ENCODE measurements at regions of chr1 and their contacts with region 1.

Region 1: GRCh38 chr1:45339789-45340570 is at the starts of genes MUTYH and TOE1:
- DNase-seq: peak; percentile 79 to 92 (median 87)
- ATAC-seq: peak; percentile 84 to 90 (median 90)
- H3K4me3 ChIP-seq: peak within 1 kb of the TSS; percentile 68 to 82
- H3K4me3 Mint-ChIP-seq: peak within 1 kb of the TSS; percentile 98 to 100 (median 100)
- H3K27ac ChIP-seq: peak within 1 kb of the TSS; percentile 95
- H3K27ac Mint-ChIP-seq: peak within 1 kb of the TSS; percentile 99 to 100
- H3K4me1 ChIP-seq: peaks cover 7 to 39% of the 10 kb centered on the region in 2 experiments
- H3K4me1 Mint-ChIP-seq: peaks cover 62 to 70% (median 62%) of the 10 kb centered on the region in 3 donors
- H3K27me3 ChIP-seq: no peaks in the 10 kb centered on the region
- H3K27me3 Mint-ChIP-seq: no peaks in the 10 kb centered on the region
- total RNA-seq, gene MUTYH: 60.2 to 71.0 (median 68.4) TPM
- total RNA-seq, gene TOE1: 16.8 to 50.0 (median 19.8) TPM

Region 2: GRCh38 chr1:44730741-44731512 is 609.1 kb before region 1 on chr1 and contains the start of gene RNU5D-1:
- CTCF ChIA-PET with region 1: no interaction called
- POLR2A ChIA-PET with region 1: interaction called, 4 to 12 read pairs
- DNase-seq: peak; percentile 82 to 96 (median 90)
- ATAC-seq: peak; percentile 83 to 85 (median 84)
- H3K4me3 ChIP-seq: peak within 1 kb of the TSS in 1 of 2 donors; percentile 45
- H3K4me3 Mint-ChIP-seq: peak within 1 kb of the TSS; percentile 62 to 80 (median 69)
- H3K27ac ChIP-seq: peak within 1 kb of the TSS; percentile 99
- H3K27ac Mint-ChIP-seq: peak within 1 kb of the TSS; percentile 100
- H3K4me1 ChIP-seq: peaks cover 6 to 25% of the 10 kb centered on the region in 2 experiments
- H3K4me1 Mint-ChIP-seq: peaks cover 26 to 38% (median 29%) of the 10 kb centered on the region in 3 donors
- H3K27me3 ChIP-seq: no peaks in the 10 kb centered on the region
- H3K27me3 Mint-ChIP-seq: no peaks in the 10 kb centered on the region
- total RNA-seq, gene RNU5D-1: 21.4 TPM in 1 of 5 donors, not detected in the others

Region 3: GRCh38 chr1:45011837-45012638 is 327.9 kb before region 1 on chr1 and contains the start of gene UROD:
- CTCF ChIA-PET with region 1: interaction called in 1 of 2 experiments, 33 read pairs
- POLR2A ChIA-PET with region 1: interaction called in 1 of 2 experiments, 5 read pairs
- DNase-seq: peak; percentile 69 to 95 (median 89)
- ATAC-seq: peak; percentile 79 to 86 (median 80)
- H3K4me3 ChIP-seq: peak within 1 kb of the TSS; percentile 71 to 90
- H3K4me3 Mint-ChIP-seq: peak within 1 kb of the TSS; percentile 82 to 94 (median 90)
- H3K27ac ChIP-seq: peak within 1 kb of the TSS; percentile 81
- H3K27ac Mint-ChIP-seq: peak within 1 kb of the TSS; percentile 88 to 91
- H3K4me1 ChIP-seq: peaks cover 21 to 54% of the 10 kb centered on the region in 2 experiments
- H3K4me1 Mint-ChIP-seq: peaks cover 51 to 59% (median 55%) of the 10 kb centered on the region in 3 donors
- H3K27me3 ChIP-seq: no peaks in the 10 kb centered on the region
- H3K27me3 Mint-ChIP-seq: no peaks in the 10 kb centered on the region
- total RNA-seq, gene UROD: 52.0 to 58.6 (median 57.3) TPM

Region 4: GRCh38 chr1:45351508-45351907 is 11.5 kb after region 1 on chr1:
- CTCF ChIA-PET with region 1: no interaction called
- POLR2A ChIA-PET with region 1: interaction called in 1 of 2 experiments, 11 read pairs
- DNase-seq: no peak
- ATAC-seq: no peak
- H3K4me3 ChIP-seq: no peak overlapping the region
- H3K4me3 Mint-ChIP-seq: no peak overlapping the region
- H3K27ac ChIP-seq: no peak overlapping the region
- H3K27ac Mint-ChIP-seq: no peak overlapping the region
- H3K4me1 ChIP-seq: no peaks in the 10 kb centered on the region
- H3K4me1 Mint-ChIP-seq: no peaks in the 10 kb centered on the region
- H3K27me3 ChIP-seq: no peaks in the 10 kb centered on the region
- H3K27me3 Mint-ChIP-seq: no peaks in the 10 kb centered on the region

Region 5: DNA sequence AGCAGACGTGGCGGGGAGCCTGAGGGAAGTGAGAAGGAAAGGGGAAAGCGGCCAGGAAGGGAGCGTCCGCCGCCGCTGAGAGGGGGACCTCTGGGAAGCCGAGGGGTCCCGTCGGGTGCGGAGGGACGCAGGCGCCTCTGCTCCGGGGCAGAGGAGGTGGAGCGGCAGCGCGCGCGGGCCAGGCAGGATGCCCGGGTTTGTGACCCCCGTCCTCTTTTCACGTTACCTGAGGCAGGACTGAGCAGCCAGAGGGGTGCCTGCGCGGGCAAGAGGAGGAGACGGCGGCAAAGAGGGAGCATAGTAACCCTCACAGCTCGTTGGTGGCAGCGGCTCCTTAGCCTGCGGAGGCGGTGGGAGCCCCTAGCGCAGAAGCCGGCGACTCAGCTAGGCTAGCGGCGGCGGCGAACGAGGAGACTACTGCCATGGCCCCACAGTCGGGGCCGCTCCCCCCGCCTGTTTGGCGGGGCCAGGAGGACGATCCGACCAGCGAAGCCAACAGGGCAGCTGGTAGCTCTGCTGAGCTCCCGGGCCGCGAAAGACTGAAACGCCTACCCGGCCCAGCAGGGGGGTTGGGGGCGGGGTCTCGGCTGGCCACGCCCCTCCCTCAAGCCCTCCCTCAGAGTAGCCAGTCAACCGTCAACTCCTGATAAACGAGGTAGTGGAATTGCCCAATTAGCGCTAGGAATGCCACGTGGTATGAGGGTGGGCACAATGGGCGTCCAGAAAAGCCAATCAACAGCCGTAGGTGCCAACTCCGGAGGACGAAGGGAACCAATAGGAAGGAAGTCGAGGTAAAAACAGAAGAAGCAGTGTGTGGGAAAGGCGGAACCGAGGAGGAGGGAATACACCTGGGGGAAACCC is 150.9 kb after region 1 on chr1 and contains the start of gene TESK2:
- CTCF ChIA-PET with region 1: interaction called, 3 to 21 read pairs
- POLR2A ChIA-PET with region 1: interaction called in 1 of 2 experiments, 14 read pairs
- DNase-seq: peak; percentile 87 to 99 (median 96)
- ATAC-seq: peak; percentile 90 to 94 (median 94)
- H3K4me3 ChIP-seq: peak within 1 kb of the TSS; percentile 66 to 68
- H3K4me3 Mint-ChIP-seq: no peak within 1 kb of the TSS
- H3K27ac ChIP-seq: peak within 1 kb of the TSS; percentile 67
- H3K27ac Mint-ChIP-seq: no peak within 1 kb of the TSS
- H3K4me1 ChIP-seq: peaks cover 2 to 19% of the 10 kb centered on the region in 2 experiments
- H3K4me1 Mint-ChIP-seq: peaks cover 6 to 13% (median 9%) of the 10 kb centered on the region in 3 donors
- H3K27me3 ChIP-seq: no peaks in the 10 kb centered on the region
- H3K27me3 Mint-ChIP-seq: no peaks in the 10 kb centered on the region
- total RNA-seq, gene TESK2: 4.3 to 7.9 (median 5.5) TPM

Region 6: DNA sequence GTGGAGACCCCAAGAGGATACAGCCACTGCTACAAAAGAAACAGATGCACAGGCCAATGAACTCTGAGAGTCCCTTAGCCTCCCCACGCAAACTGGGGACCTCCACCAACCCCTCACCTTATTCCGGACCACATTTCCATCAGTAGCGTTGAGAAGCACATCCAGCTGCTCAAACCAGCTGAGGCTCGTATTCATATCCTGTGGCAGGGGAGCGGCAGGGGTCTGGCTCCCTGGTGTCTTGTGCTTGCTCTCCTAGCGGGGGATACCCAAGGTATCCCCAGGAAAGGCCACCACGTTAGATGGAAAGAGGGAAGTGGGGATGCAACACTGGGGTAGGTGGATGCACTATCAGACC is 159.4 kb after region 1 on chr1:
- CTCF ChIA-PET with region 1: interaction called in 1 of 2 experiments, 14 read pairs
- POLR2A ChIA-PET with region 1: interaction called in 1 of 2 experiments, 7 read pairs
- DNase-seq: no peak
- ATAC-seq: peak in 1 of 4 experiments; percentile 5
- H3K4me3 ChIP-seq: peak overlapping the region; percentile 82 to 94
- H3K4me3 Mint-ChIP-seq: peak overlapping the region; percentile 91 to 94 (median 93)
- H3K27ac ChIP-seq: peak overlapping the region; percentile 66
- H3K27ac Mint-ChIP-seq: peak overlapping the region; percentile 89 to 90
- H3K4me1 ChIP-seq: peaks cover 6 to 27% of the 10 kb centered on the region in 2 experiments
- H3K4me1 Mint-ChIP-seq: peaks cover 28 to 37% (median 31%) of the 10 kb centered on the region in 3 donors
- H3K27me3 ChIP-seq: no peaks in the 10 kb centered on the region
- H3K27me3 Mint-ChIP-seq: no peaks in the 10 kb centered on the region

Region 7: DNA sequence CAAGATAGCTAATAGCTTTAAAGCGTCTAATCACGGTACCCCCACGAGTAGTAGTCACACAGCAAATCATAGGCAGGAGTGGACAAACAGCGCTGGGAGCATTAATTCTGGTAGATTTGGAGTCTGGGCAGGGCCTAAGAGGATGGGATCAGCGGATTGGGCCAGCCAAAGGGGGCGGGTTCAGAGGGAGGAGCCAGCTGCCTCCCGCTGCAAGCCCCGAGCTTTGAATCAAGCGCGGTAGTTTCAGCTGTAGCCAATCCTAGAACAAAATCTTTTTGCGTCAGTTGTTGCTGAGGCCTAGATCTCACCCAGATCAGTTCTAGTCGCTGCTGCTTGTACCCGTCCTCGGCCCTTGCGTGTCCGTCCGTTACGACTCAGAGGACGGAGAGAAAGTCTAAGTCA is 243.3 kb after region 1 on chr1:
- CTCF ChIA-PET with region 1: interaction called in 1 of 2 experiments, 5 read pairs
- POLR2A ChIA-PET with region 1: interaction called in 1 of 2 experiments, 12 read pairs
- DNase-seq: peak; percentile 83 to 98 (median 94)
- ATAC-seq: peak; percentile 76 to 80 (median 78)
- H3K4me3 ChIP-seq: peak overlapping the region; percentile 73 to 98
- H3K4me3 Mint-ChIP-seq: peak overlapping the region; percentile 98 to 100 (median 99)
- H3K27ac ChIP-seq: peak overlapping the region; percentile 87
- H3K27ac Mint-ChIP-seq: peak overlapping the region; percentile 98 to 99
- H3K4me1 ChIP-seq: peaks cover 18 to 31% of the 10 kb centered on the region in 2 experiments
- H3K4me1 Mint-ChIP-seq: peaks cover 29 to 41% (median 31%) of the 10 kb centered on the region in 3 donors
- H3K27me3 ChIP-seq: no peaks in the 10 kb centered on the region
- H3K27me3 Mint-ChIP-seq: no peaks in the 10 kb centered on the region

Region 8: GRCh38 chr1:45608175-45609156 is 268.5 kb after region 1 on chr1:
- CTCF ChIA-PET with region 1: no interaction called
- POLR2A ChIA-PET with region 1: no interaction called
- DNase-seq: peak in 1 of 35 experiments; percentile 31
- ATAC-seq: peak in 1 of 4 experiments; percentile 20
- H3K4me3 ChIP-seq: no peak overlapping the region
- H3K4me3 Mint-ChIP-seq: no peak overlapping the region
- H3K27ac ChIP-seq: no peak overlapping the region
- H3K27ac Mint-ChIP-seq: peak overlapping the region; percentile 63 to 73
- H3K4me1 ChIP-seq: no peaks in the 10 kb centered on the region
- H3K4me1 Mint-ChIP-seq: peaks cover 28 to 31% (median 29%) of the 10 kb centered on the region in 3 donors
- H3K27me3 ChIP-seq: no peaks in the 10 kb centered on the region
- H3K27me3 Mint-ChIP-seq: no peaks in the 10 kb centered on the region

Measured in T-cell (primary cell).